Naive thymus-derived CD4-positive, alpha-beta T cell (primary cell): ENCODE measurements at regions of chr13 and their contacts with region 1.

Region 1: DNA sequence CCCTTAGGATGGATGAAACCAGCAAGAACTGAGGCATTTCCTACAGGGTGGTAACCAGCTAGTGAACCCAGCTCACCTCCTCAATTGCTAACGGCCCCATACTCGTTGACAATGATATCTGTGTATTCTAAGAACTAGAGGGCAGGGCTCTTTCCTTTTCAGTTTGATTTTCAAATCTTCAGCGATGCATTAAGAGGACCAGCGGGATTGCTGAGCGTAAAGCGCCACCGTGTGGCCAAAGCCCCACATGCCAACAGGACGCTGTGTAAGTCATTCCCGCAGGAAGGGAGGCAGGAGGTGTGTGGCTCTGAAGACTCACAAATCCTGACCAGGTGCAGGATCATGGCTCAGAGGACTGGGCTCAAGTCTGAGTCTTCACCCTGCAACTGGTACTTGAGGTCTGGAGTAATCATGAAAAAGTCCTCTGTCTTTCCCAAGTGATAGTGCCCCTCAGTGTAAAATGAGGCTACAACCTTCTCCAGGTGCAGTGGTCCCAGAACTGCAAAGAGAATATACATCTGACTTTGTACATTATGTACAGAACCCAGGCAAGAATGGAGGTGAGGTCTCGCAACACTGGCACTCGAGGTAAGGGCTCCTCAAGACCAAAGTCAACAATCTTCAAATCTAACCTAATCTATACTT is 40.9 kb downstream of the C13orf42 start:
- DNase-seq: peak; percentile 43 to 75 (median 66)
- ATAC-seq: peak; percentile 83
- H3K4me3 ChIP-seq: no peak overlapping the region
- H3K4me3 Mint-ChIP-seq: peak overlapping the region in 2 of 10 donors; percentile 7 to 27
- H3K27ac ChIP-seq: no peak overlapping the region
- H3K27ac Mint-ChIP-seq: peak overlapping the region in 1 of 9 donors; percentile 76
- H3K4me1 ChIP-seq: no peaks in the 10 kb centered on the region
- H3K4me1 Mint-ChIP-seq: peaks cover 0 to 37% (median 7%) of the 10 kb centered on the region in 7 donors
- H3K27me3 ChIP-seq: no peaks in the 10 kb centered on the region
- H3K27me3 Mint-ChIP-seq: peaks cover 10 to 25% (median 16%) of the 10 kb centered on the region in 5 donors

Region 2: DNA sequence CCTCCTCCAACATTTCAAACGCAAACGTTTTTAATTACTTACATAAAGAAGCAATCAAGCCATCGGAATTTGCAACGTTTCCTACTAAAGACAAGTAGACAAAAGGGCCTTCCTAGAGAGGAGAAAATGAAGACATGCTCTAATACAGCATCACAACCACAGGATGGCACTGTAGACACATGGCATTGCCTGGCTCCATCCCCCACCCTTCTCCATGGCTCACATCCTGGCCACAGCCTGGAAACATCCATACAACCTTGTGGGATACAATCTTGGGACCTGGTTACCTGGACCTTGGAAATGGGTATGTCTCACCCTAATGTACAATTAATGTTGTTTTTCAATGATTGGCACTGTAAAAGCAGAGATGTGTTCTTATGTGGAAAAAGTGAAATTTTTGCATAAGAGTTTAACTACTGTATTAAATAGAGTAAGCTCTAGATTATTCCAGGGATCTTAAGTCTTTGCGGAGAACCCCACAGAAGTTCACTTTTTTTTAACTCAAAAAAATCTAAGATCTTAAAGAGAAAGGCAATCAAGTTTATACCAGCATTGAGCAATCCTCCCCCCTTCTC is 1400.3 kb before region 1 on chr13:
- CTCF ChIA-PET with region 1: no interaction called
- POLR2A ChIA-PET with region 1: no interaction called
- intact Hi-C with region 1: loop called in 1 of 2 experiments (anchors 1 kb)
- DNase-seq: peak in 2 of 9 donors; percentile 21 to 37
- ATAC-seq: peak; percentile 76
- H3K4me3 ChIP-seq: no peak overlapping the region
- H3K4me3 Mint-ChIP-seq: no peak overlapping the region
- H3K27ac ChIP-seq: no peak overlapping the region
- H3K27ac Mint-ChIP-seq: no peak overlapping the region
- H3K4me1 ChIP-seq: no peaks in the 10 kb centered on the region
- H3K4me1 Mint-ChIP-seq: peaks cover 0 to 10% (median 3%) of the 10 kb centered on the region in 7 donors
- H3K27me3 ChIP-seq: no peaks in the 10 kb centered on the region
- H3K27me3 Mint-ChIP-seq: no peaks in the 10 kb centered on the region

Region 3: DNA sequence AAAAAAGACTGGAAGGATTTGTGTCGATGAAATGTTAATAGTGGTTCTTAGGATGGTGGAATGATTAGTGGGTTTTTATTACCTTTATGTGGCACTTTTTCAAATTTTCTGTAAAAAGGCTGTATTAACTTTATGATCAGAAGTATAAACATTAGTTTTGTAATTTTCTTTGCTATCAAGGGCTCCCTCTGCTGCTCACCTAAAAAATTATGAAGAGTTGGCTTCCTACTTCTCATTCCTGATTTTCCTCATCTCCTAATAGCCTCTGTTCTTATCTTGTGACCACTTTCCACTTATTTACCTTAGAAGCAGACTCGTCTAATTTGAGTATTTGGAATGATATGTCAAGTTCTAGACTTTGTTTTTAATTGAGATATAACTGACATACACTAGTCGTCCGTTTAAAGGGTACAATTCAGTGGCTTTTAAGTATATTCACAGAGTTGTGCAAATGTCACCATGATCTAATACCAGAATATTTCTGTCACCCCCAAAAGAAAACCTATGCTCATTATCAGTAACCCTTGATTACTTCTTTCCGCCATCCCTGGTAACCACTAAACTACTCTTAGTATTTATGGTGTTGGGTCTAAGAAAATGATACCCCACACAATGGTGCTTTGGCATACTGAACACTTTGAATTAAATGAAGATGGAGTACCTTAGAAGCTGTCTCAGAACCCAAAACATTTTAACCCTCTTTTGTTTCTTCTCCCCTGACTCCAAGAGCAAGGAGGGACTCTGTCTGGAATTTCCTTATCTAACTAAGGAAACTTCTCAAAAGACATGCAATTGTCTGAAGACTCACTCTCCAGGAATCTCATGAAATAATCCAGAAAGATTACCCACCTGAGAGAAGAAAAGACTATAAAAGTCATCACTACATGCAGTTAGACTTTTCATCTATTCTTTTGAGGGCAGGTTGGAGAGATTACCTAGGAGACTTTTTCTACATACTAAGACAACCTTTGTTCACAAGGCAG is 537.9 kb before region 1 on chr13:
- CTCF ChIA-PET with region 1: no interaction called
- POLR2A ChIA-PET with region 1: no interaction called
- intact Hi-C with region 1: loop called in 1 of 2 experiments (anchors 5 kb)
- DNase-seq: no peak
- ATAC-seq: no peak
- H3K4me3 ChIP-seq: no peak overlapping the region
- H3K4me3 Mint-ChIP-seq: no peak overlapping the region
- H3K27ac ChIP-seq: no peak overlapping the region
- H3K27ac Mint-ChIP-seq: no peak overlapping the region
- H3K4me1 ChIP-seq: no peaks in the 10 kb centered on the region
- H3K4me1 Mint-ChIP-seq: peaks cover 9 to 28% (median 13%) of the 10 kb centered on the region in 7 donors
- H3K27me3 ChIP-seq: no peaks in the 10 kb centered on the region
- H3K27me3 Mint-ChIP-seq: peaks cover 0 to 17% (median 11%) of the 10 kb centered on the region in 5 donors

Region 4: DNA sequence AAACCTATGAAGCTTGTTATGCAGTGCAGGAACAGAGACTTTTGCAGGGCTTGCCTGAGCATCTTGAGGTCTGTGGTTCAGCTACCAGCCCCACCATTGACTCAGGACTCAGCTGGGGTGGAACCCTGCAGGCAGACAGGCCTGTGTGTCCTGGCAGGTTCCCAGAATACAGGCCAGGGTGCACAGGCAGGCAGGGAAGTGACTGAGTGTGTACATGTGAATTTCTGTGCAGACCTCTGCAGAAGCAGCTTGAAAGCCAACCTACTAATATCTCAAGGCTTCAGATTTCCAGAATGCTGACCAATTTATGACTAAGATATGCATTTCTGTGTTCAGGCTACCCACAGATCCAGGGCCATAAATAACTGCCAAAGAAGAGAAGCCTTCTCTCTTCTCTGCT is 481.0 kb before region 1 on chr13:
- CTCF ChIA-PET with region 1: no interaction called
- POLR2A ChIA-PET with region 1: no interaction called
- intact Hi-C with region 1: no loop called
- DNase-seq: no peak
- ATAC-seq: no peak
- H3K4me3 ChIP-seq: no peak overlapping the region
- H3K4me3 Mint-ChIP-seq: no peak overlapping the region
- H3K27ac ChIP-seq: no peak overlapping the region
- H3K27ac Mint-ChIP-seq: no peak overlapping the region
- H3K4me1 ChIP-seq: peaks cover 0 to 9% of the 10 kb centered on the region in 2 donors
- H3K4me1 Mint-ChIP-seq: peaks cover 7 to 26% (median 17%) of the 10 kb centered on the region in 7 donors
- H3K27me3 ChIP-seq: no peaks in the 10 kb centered on the region
- H3K27me3 Mint-ChIP-seq: peaks cover 0 to 2% (median 0%) of the 10 kb centered on the region in 5 donors